Body of pancreas (tissue), 4 donors: ENCODE measurements at regions of chr11 and their contacts with region 1.

Region 1: GRCh38 chr11:57527056-57527631 is 3.4 kb downstream of the TIMM10 start:
- DNase-seq: peak; percentile 81 to 90 (median 86)
- ATAC-seq: peak; percentile 21
- H3K4me3 ChIP-seq: no peak overlapping the region
- H3K27ac ChIP-seq: peak overlapping the region in 1 of 4 donors; percentile 7
- H3K4me1 ChIP-seq: peaks cover 26% of the 10 kb centered on the region
- H3K27me3 ChIP-seq: no peaks in the 10 kb centered on the region
- CTCF ChIP-seq: peak; percentile 72 to 98 (median 96)
- POLR2A ChIP-seq: no peak

Region 2: GRCh38 chr11:57460022-57460757 is 67.0 kb before region 1 on chr11 and contains the start of gene RTN4RL2:
- intact Hi-C with region 1: loop called (anchors 5 kb)
- DNase-seq: peak; percentile 40 to 51 (median 48)
- ATAC-seq: peak; percentile 37
- H3K4me3 ChIP-seq: no peak within 1 kb of the TSS
- H3K27ac ChIP-seq: no peak within 1 kb of the TSS
- H3K4me1 ChIP-seq: peaks cover 39% of the 10 kb centered on the region
- H3K27me3 ChIP-seq: no peaks in the 10 kb centered on the region
- CTCF ChIP-seq: peak in 2 of 7 experiments; percentile 10 to 14
- POLR2A ChIP-seq: no peak
- total RNA-seq, gene RTN4RL2: 0.99 to 3.4 TPM

Region 3: GRCh38 chr11:57485217-57485990 is 41.7 kb before region 1 on chr11:
- intact Hi-C with region 1: loop called (anchors 5 kb)
- DNase-seq: peak in 1 of 4 donors; percentile 8
- ATAC-seq: no peak
- H3K4me3 ChIP-seq: no peak overlapping the region
- H3K27ac ChIP-seq: no peak overlapping the region
- H3K4me1 ChIP-seq: peaks cover 21% of the 10 kb centered on the region
- H3K27me3 ChIP-seq: no peaks in the 10 kb centered on the region
- CTCF ChIP-seq: no peak
- POLR2A ChIP-seq: peak in 1 of 3 donors; percentile 8